CD4-positive, alpha-beta T cell (primary cell): ENCODE measurements at regions of chr15 and their contacts with region 1.

Region 1: GRCh38 chr15:45468294-45468693 is 54.3 kb downstream of the SLC30A4 start:
- DNase-seq: no peak
- ATAC-seq: no peak
- H3K4me3 ChIP-seq: no peak overlapping the region
- H3K4me3 Mint-ChIP-seq: no peak overlapping the region
- H3K27ac ChIP-seq: no peak overlapping the region
- H3K27ac Mint-ChIP-seq: no peak overlapping the region
- H3K4me1 ChIP-seq: no peaks in the 10 kb centered on the region
- H3K4me1 Mint-ChIP-seq: no peaks in the 10 kb centered on the region
- H3K27me3 ChIP-seq: peaks cover 0 to 17% of the 10 kb centered on the region in 2 experiments
- H3K27me3 Mint-ChIP-seq: peaks cover 34% of the 10 kb centered on the region
- CTCF ChIP-seq: no peak

Region 2: GRCh38 chr15:45320581-45321205 is 147.6 kb before region 1 on chr15:
- CTCF ChIA-PET with region 1: no interaction called
- POLR2A ChIA-PET with region 1: no interaction called
- intact Hi-C with region 1: no loop called
- DNase-seq: no peak
- ATAC-seq: no peak
- H3K4me3 ChIP-seq: no peak overlapping the region
- H3K4me3 Mint-ChIP-seq: no peak overlapping the region
- H3K27ac ChIP-seq: no peak overlapping the region
- H3K27ac Mint-ChIP-seq: no peak overlapping the region
- H3K4me1 ChIP-seq: no peaks in the 10 kb centered on the region
- H3K4me1 Mint-ChIP-seq: no peaks in the 10 kb centered on the region
- H3K27me3 ChIP-seq: peaks cover 4 to 14% of the 10 kb centered on the region in 2 experiments
- H3K27me3 Mint-ChIP-seq: peaks cover 36% of the 10 kb centered on the region
- CTCF ChIP-seq: no peak

Region 3: DNA sequence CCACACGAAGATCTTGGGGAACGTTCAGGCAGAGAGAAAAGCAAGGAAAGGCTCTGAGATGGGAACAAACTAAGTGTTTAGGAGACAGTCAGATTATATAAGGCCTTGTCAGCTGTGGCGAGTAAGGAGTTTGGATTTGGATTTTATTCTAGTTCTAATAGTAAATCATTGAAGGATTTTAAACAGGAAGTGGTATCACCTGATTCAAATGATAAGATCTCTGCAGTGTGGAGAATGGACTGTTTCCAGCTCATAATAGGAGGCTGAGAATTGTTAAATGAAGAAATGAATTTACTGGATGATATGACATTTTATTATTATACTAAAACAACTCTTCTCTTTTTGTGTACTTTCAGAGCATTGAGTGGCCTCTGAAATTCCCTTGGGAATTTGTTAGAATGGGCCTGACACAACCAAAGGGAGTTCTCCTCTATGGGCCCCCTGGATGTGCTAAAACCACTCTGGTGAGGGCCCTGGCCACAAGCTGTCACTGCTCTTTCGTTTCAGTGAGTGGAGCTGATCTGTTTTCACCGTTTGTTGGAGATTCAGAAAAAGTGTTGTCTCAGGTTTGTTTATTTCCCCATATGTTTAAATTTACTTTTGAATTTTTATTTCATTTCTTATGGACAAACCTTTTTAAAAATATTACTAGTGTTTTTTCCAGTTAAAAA is 53.9 kb before region 1 on chr15:
- CTCF ChIA-PET with region 1: no interaction called
- POLR2A ChIA-PET with region 1: no interaction called
- intact Hi-C with region 1: loop called in 1 of 2 experiments (anchors 10 kb)
- DNase-seq: peak in 1 of 14 experiments; percentile 24
- ATAC-seq: no peak
- H3K4me3 ChIP-seq: no peak overlapping the region
- H3K4me3 Mint-ChIP-seq: no peak overlapping the region
- H3K27ac ChIP-seq: no peak overlapping the region
- H3K27ac Mint-ChIP-seq: peak overlapping the region; percentile 10
- H3K4me1 ChIP-seq: peaks cover 12% of the 10 kb centered on the region
- H3K4me1 Mint-ChIP-seq: peaks cover 29% of the 10 kb centered on the region
- H3K27me3 ChIP-seq: no peaks in the 10 kb centered on the region
- H3K27me3 Mint-ChIP-seq: no peaks in the 10 kb centered on the region
- CTCF ChIP-seq: no peak